H1 (cell line): ENCODE measurements at regions of chr18 and their contacts with region 1.

Region 1: DNA sequence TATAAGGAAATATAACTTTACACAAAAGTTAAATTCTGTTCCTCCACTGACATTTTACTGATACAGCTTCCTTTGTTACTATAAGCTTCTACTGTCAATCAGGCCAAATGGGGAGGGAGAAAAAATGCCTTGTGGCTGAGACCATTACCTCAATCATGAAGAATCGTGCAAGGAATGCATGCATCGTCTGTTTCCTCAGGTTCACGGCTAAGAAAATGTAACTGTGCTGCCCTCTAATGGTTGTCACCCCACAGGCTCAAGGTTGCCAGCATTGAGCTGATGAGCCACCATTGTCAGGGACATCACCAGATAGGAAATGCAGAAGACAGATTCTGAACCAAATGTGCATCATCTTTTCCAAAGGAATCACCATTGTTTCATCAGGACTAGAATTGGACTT is 426.9 kb downstream of the CDH2 start:
- DNase-seq: peak; percentile 64 to 67
- H3K4me3 ChIP-seq: no peak overlapping the region
- H3K27ac ChIP-seq: no peak overlapping the region
- H3K4me1 ChIP-seq: no peaks in the 10 kb centered on the region; a peak in 2 of 7 replicates
- H3K27me3 ChIP-seq: no peaks in the 10 kb centered on the region
- CTCF ChIP-seq: peak; percentile 66 to 98 (median 89)
- EP300 ChIP-seq: no peak
- POLR2A ChIP-seq: no peak
- RAD21 ChIP-seq: peak; percentile 96 to 97

Region 2: GRCh38 chr18:27605107-27605834 is 144.7 kb before region 1 on chr18:
- CTCF ChIA-PET with region 1: interaction called, 194 read pairs
- POLR2A ChIA-PET with region 1: interaction called, 4 read pairs
- DNase-seq: peak in 1 of 2 experiments; percentile 62
- H3K4me3 ChIP-seq: no peak overlapping the region
- H3K27ac ChIP-seq: no peak overlapping the region
- H3K4me1 ChIP-seq: peaks cover 0 to 6% (median 3%) of the 10 kb centered on the region in 4 experiments; a peak in 3 of 7 replicates
- H3K27me3 ChIP-seq: no peaks in the 10 kb centered on the region
- CTCF ChIP-seq: peak; percentile 29 to 91 (median 79)
- EP300 ChIP-seq: no peak
- POLR2A ChIP-seq: no peak
- RAD21 ChIP-seq: peak; percentile 91 to 94

Region 3: DNA sequence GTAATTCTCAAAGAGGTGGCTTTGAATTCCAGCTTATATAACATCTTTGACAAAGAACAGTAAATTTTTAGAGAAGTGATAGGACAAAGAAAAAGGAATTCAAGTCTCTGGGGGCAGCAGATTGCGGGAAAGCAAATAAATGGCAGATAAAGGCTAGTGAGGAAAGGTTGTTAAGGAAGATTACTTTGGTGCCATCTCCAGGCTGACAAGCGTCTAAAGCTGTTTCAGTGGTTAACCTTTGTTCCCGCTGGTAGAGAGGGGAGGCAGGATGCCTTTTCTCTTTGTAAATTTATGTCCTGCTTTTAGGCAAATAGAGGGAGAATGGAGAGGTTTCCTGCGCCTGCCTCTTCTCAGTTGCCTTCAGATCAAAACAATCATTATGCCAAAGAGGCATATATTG is 133.7 kb before region 1 on chr18:
- CTCF ChIA-PET with region 1: interaction called, 16 read pairs
- POLR2A ChIA-PET with region 1: no interaction called
- DNase-seq: no peak
- H3K4me3 ChIP-seq: no peak overlapping the region
- H3K27ac ChIP-seq: no peak overlapping the region
- H3K4me1 ChIP-seq: no peaks in the 10 kb centered on the region; a peak in 2 of 7 replicates
- H3K27me3 ChIP-seq: no peaks in the 10 kb centered on the region
- CTCF ChIP-seq: peak in 1 of 3 experiments; percentile 3; a peak in 1 of 4 replicates
- EP300 ChIP-seq: no peak
- POLR2A ChIP-seq: no peak
- RAD21 ChIP-seq: peak; percentile 9 to 26; a peak in 2 of 4 replicates

Region 4: DNA sequence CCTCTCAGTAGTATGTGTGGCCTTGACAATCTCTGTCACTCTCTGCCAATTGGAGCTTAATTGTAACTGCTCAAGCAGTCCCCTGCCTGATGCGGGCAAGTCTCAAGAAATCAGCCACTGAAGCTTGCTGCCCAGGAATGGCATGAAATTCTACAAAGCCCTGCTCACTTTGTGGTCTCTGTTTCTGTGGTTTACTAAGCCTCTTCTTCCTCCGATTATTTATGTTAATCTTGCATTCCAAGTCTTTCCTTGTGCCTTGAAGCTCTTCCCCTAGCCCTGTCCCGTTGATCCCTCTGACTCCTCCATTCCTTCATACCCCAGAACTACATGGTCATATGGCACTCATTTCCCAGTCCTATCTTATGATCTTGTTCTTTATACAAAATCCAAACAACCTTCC is 75.6 kb before region 1 on chr18:
- CTCF ChIA-PET with region 1: interaction called, 23 read pairs
- POLR2A ChIA-PET with region 1: no interaction called
- DNase-seq: no peak
- H3K4me3 ChIP-seq: no peak overlapping the region
- H3K27ac ChIP-seq: no peak overlapping the region
- H3K4me1 ChIP-seq: no peaks in the 10 kb centered on the region
- H3K27me3 ChIP-seq: no peaks in the 10 kb centered on the region
- CTCF ChIP-seq: no peak
- EP300 ChIP-seq: no peak
- POLR2A ChIP-seq: no peak
- RAD21 ChIP-seq: no peak

Region 5: DNA sequence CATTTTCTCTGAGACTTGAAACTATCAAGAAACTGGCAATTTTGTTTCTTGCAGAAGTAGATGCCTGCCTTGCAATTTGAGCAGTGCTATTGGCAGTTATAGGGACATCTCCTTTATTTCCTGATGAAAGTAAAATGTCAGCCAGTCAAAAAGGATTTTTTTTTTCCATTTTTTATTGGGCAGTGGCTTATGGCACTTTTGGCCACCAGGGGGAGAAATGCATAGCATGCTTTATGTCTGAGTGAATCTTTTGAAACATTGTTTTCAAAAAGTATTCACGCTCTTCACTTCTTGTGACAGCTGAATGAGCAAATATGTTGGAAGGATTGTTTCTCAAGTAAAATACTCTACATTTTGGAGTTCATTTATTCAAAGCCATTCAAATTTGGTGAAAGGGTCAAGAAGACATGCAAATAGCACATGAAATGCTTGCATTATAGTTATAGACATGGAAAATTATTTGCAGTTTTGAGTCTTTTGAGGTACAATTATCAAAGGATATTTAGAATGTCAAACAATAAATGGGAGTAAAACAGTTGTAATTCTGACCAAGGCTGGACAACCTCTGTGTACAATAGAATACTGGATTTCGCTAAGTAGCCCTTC is 64.1 kb before region 1 on chr18:
- CTCF ChIA-PET with region 1: interaction called, 57 read pairs
- POLR2A ChIA-PET with region 1: no interaction called
- DNase-seq: no peak
- H3K4me3 ChIP-seq: no peak overlapping the region
- H3K27ac ChIP-seq: no peak overlapping the region
- H3K4me1 ChIP-seq: no peaks in the 10 kb centered on the region
- H3K27me3 ChIP-seq: no peaks in the 10 kb centered on the region
- CTCF ChIP-seq: peak in 2 of 3 experiments; percentile 48 to 63; a peak in 3 of 4 replicates
- EP300 ChIP-seq: no peak
- POLR2A ChIP-seq: no peak
- RAD21 ChIP-seq: peak; percentile 53 to 62

Region 6: DNA sequence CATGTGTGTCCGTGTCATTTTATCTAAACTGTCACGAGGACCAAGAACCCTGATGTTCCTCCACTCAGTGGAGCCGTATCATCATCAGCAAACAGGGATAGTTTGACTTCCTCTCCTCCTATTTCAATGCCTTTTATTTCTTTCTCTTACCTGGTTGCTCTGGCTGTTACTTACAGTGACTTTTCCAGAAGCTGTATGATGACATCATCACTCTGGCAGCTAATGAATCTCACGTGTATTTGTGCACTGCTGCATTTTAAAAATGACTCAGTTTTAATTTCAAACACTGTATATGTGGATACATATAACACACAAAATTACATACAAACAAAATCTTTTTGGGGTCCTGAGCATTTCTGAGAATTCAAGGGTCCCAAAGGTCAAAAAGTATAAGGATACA is 54.5 kb before region 1 on chr18:
- CTCF ChIA-PET with region 1: interaction called, 15 read pairs
- POLR2A ChIA-PET with region 1: no interaction called
- DNase-seq: no peak
- H3K4me3 ChIP-seq: no peak overlapping the region
- H3K27ac ChIP-seq: no peak overlapping the region
- H3K4me1 ChIP-seq: 0 out of 7 replicates have a peak, but pooled peaks cover 0 to 3% (median under 1%) of the 10 kb centered on the region in 4 experiments
- H3K27me3 ChIP-seq: no peaks in the 10 kb centered on the region
- CTCF ChIP-seq: no peak
- EP300 ChIP-seq: no peak
- POLR2A ChIP-seq: no peak
- RAD21 ChIP-seq: no peak

Region 7: GRCh38 chr18:27762054-27762453 is 12.0 kb after region 1 on chr18:
- CTCF ChIA-PET with region 1: interaction called, 19 read pairs
- POLR2A ChIA-PET with region 1: no interaction called
- DNase-seq: no peak
- H3K4me3 ChIP-seq: no peak overlapping the region
- H3K27ac ChIP-seq: no peak overlapping the region
- H3K4me1 ChIP-seq: peaks cover 0 to 10% (median 1%) of the 10 kb centered on the region in 4 experiments; a peak in 1 of 7 replicates
- H3K27me3 ChIP-seq: no peaks in the 10 kb centered on the region
- CTCF ChIP-seq: no peak
- EP300 ChIP-seq: no peak
- POLR2A ChIP-seq: no peak
- RAD21 ChIP-seq: no peak